ENCODE measurements at regions of chr18 and their contacts with region 1.

Region 1: GRCh38 chr18:21012308-21012707 is 99.3 kb downstream of the ROCK1 start:
- DNase-seq: no peak
- ATAC-seq: no peak
- H3K4me3 ChIP-seq: no peak overlapping the region
- H3K27ac ChIP-seq: no peak overlapping the region
- H3K4me1 ChIP-seq: no peaks in the 10 kb centered on the region
- H3K27me3 ChIP-seq: no peaks in the 10 kb centered on the region
- CTCF ChIP-seq: no peak
- EP300 ChIP-seq: no peak
- POLR2A ChIP-seq: no peak
- RAD21 ChIP-seq: no peak

Region 2: DNA sequence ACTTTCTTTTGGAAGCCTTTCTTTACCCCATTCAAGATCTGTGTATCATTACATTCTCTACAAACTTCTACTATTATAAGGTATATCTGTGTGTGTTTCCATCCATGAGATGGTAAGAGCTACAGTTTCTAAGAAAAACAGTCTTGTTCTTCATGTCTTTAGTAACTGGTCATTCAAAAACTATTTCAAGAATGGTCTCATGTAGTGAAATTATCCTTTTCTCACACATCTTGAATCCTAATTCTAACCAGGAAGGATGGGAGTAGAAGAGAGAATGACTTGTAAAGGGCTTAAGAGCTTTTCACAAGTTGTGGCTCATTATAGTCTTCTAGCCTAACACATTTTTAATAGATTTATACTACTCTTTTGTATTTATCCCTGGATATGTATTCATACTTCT is 52.0 kb after region 1 on chr18:
- CTCF ChIA-PET with region 1: no interaction called
- POLR2A ChIA-PET with region 1: no interaction called
- in situ Hi-C with region 1: no loop called
- intact Hi-C with region 1: loop called (anchors 5 kb)
- DNase-seq: no peak
- ATAC-seq: no peak
- H3K4me3 ChIP-seq: no peak overlapping the region
- H3K27ac ChIP-seq: no peak overlapping the region
- H3K4me1 ChIP-seq: no peaks in the 10 kb centered on the region
- H3K27me3 ChIP-seq: no peaks in the 10 kb centered on the region
- CTCF ChIP-seq: no peak
- EP300 ChIP-seq: no peak
- POLR2A ChIP-seq: no peak
- RAD21 ChIP-seq: no peak

Region 3: DNA sequence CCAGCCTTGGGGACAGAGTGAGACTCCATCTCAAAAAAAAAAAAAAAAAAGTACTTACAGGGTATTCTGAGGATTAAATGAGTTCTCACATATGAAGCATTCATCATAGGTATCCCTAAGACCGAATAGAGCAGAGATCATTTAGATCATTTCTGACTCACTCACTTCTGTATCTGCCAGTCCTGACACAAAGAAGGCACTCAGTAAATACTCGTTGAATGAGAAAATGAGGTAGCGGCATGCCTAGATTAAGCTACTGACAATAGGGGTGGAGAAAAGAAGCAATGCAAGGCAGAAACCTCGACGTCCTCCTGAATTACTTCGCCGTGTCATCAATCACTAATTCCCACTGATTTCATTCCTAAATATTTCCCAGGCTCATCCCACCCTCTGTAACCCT is 333.5 kb after region 1 on chr18:
- CTCF ChIA-PET with region 1: no interaction called
- POLR2A ChIA-PET with region 1: no interaction called
- in situ Hi-C with region 1: no loop called
- intact Hi-C with region 1: no loop called
- DNase-seq: no peak
- ATAC-seq: no peak
- H3K4me3 ChIP-seq: no peak overlapping the region
- H3K27ac ChIP-seq: no peak overlapping the region
- H3K4me1 ChIP-seq: no peaks in the 10 kb centered on the region
- H3K27me3 ChIP-seq: peaks cover 3 to 5% of the 10 kb centered on the region in 2 experiments; a peak in 2 of 5 replicates
- CTCF ChIP-seq: no peak
- EP300 ChIP-seq: no peak
- POLR2A ChIP-seq: no peak
- RAD21 ChIP-seq: no peak

Measured in K562 (cell line).